Ovary (tissue), 10 donors: ENCODE measurements at regions of chrX and their contacts with region 1.

Region 1: GRCh38 chrX:24150051-24150790 is 692 bp downstream of the ZFX start:
- DNase-seq: peak; percentile 94 to 95 (median 94)
- H3K4me3 ChIP-seq: peak overlapping the region; percentile 73
- H3K27ac ChIP-seq: peak overlapping the region; percentile 100
- H3K4me1 ChIP-seq: peaks cover 14% of the 10 kb centered on the region
- H3K27me3 ChIP-seq: no peaks in the 10 kb centered on the region
- CTCF ChIP-seq: peak; percentile 23 to 79 (median 72)
- EP300 ChIP-seq: no peak
- POLR2A ChIP-seq: peak; percentile 58

Region 2: GRCh38 chrX:22922961-22923360 is 1227.3 kb before region 1 on chrX:
- intact Hi-C with region 1: no loop called
- DNase-seq: peak in 2 of 5 donors; percentile 10 to 16
- H3K4me3 ChIP-seq: no peak overlapping the region
- H3K27ac ChIP-seq: no peak overlapping the region
- H3K4me1 ChIP-seq: no peaks in the 10 kb centered on the region
- H3K27me3 ChIP-seq: no peaks in the 10 kb centered on the region
- CTCF ChIP-seq: no peak
- EP300 ChIP-seq: no peak
- POLR2A ChIP-seq: no peak

Region 3: GRCh38 chrX:23465105-23465791 is 685.0 kb before region 1 on chrX:
- intact Hi-C with region 1: no loop called
- DNase-seq: no peak
- H3K4me3 ChIP-seq: no peak overlapping the region
- H3K27ac ChIP-seq: no peak overlapping the region
- H3K4me1 ChIP-seq: no peaks in the 10 kb centered on the region
- H3K27me3 ChIP-seq: no peaks in the 10 kb centered on the region
- CTCF ChIP-seq: no peak
- EP300 ChIP-seq: no peak
- POLR2A ChIP-seq: no peak

Region 4: DNA sequence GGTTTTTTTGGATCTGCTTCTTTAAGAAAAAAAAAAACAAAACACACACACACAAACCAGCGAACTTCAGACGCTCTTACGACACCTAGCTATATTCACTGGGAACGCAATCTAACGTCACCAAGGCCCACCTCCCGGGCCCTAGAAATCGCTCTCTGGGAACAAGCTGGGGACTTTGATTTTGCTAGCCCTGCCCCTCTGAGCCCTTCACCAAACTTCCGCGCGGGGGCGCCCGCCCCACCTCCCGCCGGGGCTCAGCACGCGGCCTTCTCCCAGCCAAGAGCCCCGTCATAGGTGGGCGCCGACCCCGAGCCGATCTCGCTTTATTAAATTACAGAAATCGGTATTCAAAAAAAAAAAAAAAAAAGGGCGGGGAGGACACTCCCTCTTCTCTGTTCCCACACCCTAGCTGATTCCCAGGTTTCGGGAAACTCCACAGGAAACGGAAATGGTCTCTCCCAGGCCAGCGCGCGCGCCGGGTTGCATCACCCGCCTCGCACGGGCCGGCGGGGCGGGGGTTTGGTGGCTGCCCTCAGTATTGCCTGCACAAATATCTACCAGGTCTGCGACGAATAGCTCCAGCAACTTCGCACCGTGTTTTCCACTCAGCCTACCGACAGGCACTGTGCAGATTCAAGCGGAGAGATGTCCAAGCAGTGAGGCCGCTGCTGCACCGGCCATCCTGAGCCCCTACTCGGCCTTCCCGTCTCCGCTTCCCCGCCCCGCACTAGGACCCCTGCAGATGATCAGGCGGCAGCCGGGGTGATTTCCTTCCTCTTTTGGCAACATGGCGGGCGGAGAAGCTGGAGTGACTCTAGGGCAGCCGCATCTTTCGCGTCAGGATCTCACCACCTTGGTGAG is 95.8 kb before region 1 on chrX and contains the start of gene EIF2S3:
- intact Hi-C with region 1: loop called in 2 of 4 experiments (anchors 5 to 10 kb)
- DNase-seq: peak; percentile 89 to 93 (median 92)
- H3K4me3 ChIP-seq: peak within 1 kb of the TSS; percentile 95
- H3K27ac ChIP-seq: peak within 1 kb of the TSS; percentile 50 to 91
- H3K4me1 ChIP-seq: no peaks in the 10 kb centered on the region
- H3K27me3 ChIP-seq: no peaks in the 10 kb centered on the region
- CTCF ChIP-seq: peak; percentile 62 to 85 (median 63)
- EP300 ChIP-seq: peak; percentile 73
- POLR2A ChIP-seq: peak; percentile 41
- total RNA-seq, gene EIF2S3: 121 to 384 (median 267) TPM

Region 5: DNA sequence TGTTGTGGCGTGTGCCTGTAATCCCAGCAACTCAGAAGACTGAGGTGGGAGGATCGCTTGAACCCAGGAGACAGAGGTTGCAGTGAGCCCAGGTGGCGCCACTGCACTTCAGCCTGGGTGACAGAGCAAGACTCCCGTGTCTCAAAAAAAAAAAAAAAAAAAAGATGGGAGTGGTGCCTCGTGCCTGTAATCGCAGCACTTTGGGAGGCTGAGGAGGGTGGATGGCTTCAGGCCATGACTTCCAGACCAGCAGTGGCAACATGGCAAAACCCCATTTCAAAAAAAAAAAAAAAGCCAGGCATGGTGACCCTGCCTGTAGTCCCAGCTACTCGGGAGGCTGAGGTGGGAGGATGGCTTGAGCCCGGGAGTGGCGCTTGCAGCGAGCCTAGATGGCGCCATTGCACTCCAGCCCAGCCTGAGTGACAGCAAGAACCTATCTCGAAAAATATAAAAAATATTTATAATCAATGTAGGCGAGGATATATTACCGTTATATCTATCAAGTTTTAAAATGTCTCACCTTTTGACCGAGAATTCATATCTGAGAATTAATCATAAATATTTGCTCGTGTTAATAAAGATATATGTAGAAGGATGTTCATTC is 68.5 kb before region 1 on chrX:
- intact Hi-C with region 1: no loop called
- DNase-seq: peak; percentile 43 to 74 (median 56)
- H3K4me3 ChIP-seq: no peak overlapping the region
- H3K27ac ChIP-seq: no peak overlapping the region
- H3K4me1 ChIP-seq: no peaks in the 10 kb centered on the region
- H3K27me3 ChIP-seq: no peaks in the 10 kb centered on the region
- CTCF ChIP-seq: no peak
- EP300 ChIP-seq: no peak
- POLR2A ChIP-seq: no peak

Region 6: GRCh38 chrX:24241822-24242648 is 91.8 kb after region 1 on chrX:
- intact Hi-C with region 1: loop called in 1 of 4 experiments (anchors 10 kb)
- DNase-seq: no peak
- H3K4me3 ChIP-seq: no peak overlapping the region
- H3K27ac ChIP-seq: no peak overlapping the region
- H3K4me1 ChIP-seq: peaks cover 1% of the 10 kb centered on the region
- H3K27me3 ChIP-seq: no peaks in the 10 kb centered on the region
- CTCF ChIP-seq: peak; percentile 23 to 31 (median 25)
- EP300 ChIP-seq: no peak
- POLR2A ChIP-seq: no peak